CD4-positive, alpha-beta T cell (primary cell): ENCODE measurements at regions of chr1 and their contacts with region 1.

Region 1: DNA sequence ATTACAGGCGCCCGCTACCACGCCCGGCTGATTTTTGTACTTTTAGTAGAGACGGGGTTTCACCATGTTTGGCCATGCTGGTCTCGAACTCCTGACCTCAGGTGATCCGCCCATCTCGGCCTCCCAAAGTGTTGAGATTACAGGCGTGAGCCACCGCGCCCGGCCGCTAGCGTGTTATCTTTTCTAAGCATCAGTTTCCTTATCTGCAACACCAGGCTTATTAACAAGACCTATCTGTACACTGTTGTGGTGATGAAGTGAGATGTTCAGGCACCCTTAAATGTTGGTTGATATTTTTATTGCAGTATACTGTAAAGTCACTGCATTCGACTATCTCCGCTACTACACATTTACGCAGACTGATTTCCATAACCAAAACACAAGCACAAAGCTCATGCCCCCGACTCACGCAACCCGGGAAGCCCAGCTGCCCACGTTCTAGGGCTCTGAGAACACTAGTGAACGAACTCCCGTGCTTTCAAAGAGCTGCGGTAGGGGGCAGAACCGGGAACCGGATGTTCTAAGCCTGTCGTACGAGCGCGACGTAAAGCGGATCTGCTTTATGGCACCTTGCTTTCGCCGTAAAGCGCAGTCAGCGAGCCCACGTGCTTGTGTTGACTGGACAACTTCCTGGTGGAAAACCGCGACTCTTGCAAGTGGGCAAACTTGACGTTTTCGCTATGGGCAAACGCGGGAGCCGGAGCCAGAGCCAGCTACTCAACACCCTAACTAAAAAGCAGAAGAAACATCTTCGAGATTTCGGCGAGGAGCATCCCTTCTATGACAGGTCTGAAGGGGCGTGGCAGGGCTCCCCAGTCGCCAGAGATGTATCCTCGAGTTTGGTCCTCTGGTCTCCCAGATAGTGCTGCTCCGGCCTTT is at the start of gene UTP25:
- DNase-seq: peak; percentile 82 to 97 (median 90)
- ATAC-seq: peak; percentile 88
- H3K4me3 ChIP-seq: peak within 1 kb of the TSS; percentile 96
- H3K4me3 Mint-ChIP-seq: peak within 1 kb of the TSS; percentile 93
- H3K27ac ChIP-seq: peak within 1 kb of the TSS; percentile 62 to 89
- H3K27ac Mint-ChIP-seq: peak within 1 kb of the TSS; percentile 91
- H3K4me1 ChIP-seq: peaks cover 29% of the 10 kb centered on the region
- H3K4me1 Mint-ChIP-seq: peaks cover 50% of the 10 kb centered on the region
- H3K27me3 ChIP-seq: no peaks in the 10 kb centered on the region
- H3K27me3 Mint-ChIP-seq: peaks cover 7% of the 10 kb centered on the region
- CTCF ChIP-seq: peak; percentile 71
- total RNA-seq, gene UTP25: 6.0 to 6.4 TPM

Region 2: DNA sequence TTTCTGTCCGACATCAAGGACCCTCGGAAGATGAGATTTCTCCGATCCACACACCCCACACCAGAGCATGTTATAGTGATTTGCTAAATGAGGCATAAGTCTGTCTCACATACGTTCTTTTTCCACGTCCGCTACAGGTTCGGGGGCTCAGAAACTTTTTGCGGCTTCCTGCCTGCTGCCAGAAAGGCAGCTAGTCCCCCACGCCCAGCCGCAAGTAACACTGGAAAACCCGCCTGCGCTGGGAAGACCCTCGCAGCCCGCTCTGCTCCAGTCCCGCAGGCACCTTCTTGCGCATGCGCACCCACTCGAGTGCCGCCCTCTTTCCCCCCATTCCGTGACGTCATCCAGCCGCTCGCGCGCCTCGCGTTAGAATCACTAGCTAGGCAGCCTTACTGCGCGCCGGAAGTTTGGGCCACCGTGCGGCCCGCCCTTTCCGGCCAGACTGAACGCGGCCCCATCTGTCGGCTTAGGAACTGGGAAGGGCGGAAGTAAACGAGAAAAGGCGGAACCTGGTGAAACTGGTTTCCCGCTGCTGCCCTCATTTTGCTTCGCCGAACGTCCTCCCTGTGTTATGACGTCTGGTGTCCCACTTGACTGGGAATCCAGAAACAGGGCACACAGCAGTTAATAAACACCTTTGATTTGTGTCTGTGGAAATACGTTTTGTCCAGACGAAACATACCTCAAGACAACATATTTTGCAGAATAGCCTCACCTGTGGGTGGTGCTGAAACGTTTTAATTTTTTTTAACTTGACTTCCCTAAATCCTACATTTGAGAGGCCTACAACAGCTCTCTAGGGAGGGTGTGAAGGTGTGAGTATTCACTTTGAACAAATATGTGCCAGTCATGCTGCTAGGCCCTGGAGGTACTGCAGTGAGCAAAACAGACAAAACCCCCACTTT is 43.1 kb before region 1 on chr1 and contains the start of gene C1orf74:
- CTCF ChIA-PET with region 1: interaction called, 10 read pairs
- POLR2A ChIA-PET with region 1: interaction called, 18 read pairs
- intact Hi-C with region 1: loop called (anchors 1 to 2 kb)
- DNase-seq: peak; percentile 98 to 100 (median 99)
- ATAC-seq: peak; percentile 98
- H3K4me3 ChIP-seq: peak within 1 kb of the TSS; percentile 69
- H3K4me3 Mint-ChIP-seq: peak within 1 kb of the TSS; percentile 93
- H3K27ac ChIP-seq: peak within 1 kb of the TSS; percentile 74 to 94
- H3K27ac Mint-ChIP-seq: peak within 1 kb of the TSS; percentile 97
- H3K4me1 ChIP-seq: peaks cover 24% of the 10 kb centered on the region
- H3K4me1 Mint-ChIP-seq: peaks cover 28% of the 10 kb centered on the region
- H3K27me3 ChIP-seq: no peaks in the 10 kb centered on the region
- H3K27me3 Mint-ChIP-seq: peaks cover 17% of the 10 kb centered on the region
- CTCF ChIP-seq: no peak
- total RNA-seq, gene C1orf74: 0.63 to 0.67 TPM

Region 3: DNA sequence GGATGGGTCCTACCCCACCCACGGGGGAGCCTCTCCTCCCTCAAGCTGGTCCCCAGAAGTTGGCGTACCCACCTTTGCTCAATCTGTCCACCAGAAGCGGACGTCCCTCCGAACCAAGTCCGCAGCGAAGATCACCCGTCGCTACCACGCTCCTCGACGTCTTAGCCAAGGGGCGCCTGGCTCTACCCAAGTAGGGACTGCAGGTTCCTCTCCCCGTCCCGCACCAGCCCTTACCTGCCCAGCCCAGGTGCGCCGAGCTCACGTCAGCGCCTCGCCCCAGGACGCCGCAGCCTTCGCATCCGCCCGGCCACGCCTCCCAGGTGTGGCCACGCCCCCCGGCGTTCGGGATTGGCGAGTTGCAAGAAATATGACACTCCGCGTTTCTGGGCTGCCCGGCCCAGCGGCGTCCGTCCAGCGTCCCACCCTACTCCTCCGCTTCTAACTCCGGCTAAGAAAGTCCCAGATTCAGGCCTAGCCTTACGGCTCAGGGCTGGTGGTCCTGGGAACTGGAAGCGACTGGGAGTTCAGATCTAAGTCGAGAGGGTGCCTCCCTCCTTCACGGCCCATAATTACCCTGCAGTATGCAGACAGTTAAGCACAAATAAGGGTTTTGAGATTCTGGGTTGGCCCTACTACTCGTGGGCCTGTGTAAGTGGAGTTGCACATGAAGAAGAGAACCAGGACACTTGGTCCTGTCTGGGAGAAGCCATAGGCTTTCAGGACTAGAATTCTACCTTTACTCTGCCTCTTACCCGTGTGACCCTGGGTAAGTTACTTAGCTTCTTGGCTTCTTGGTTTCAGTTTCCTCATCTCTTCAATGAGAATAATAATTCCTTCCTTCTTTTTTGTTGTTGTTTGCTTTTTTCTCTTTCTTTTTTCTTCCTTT is 21.5 kb before region 1 on chr1 and contains the start of gene IRF6:
- CTCF ChIA-PET with region 1: interaction called, 18 read pairs
- POLR2A ChIA-PET with region 1: interaction called, 6 read pairs
- intact Hi-C with region 1: no loop called
- DNase-seq: peak; percentile 41 to 86 (median 68)
- ATAC-seq: peak; percentile 96
- H3K4me3 ChIP-seq: peak within 1 kb of the TSS; percentile 45
- H3K4me3 Mint-ChIP-seq: peak within 1 kb of the TSS; percentile 88
- H3K27ac ChIP-seq: no peak within 1 kb of the TSS
- H3K27ac Mint-ChIP-seq: peak within 1 kb of the TSS; percentile 65
- H3K4me1 ChIP-seq: peaks cover 8% of the 10 kb centered on the region
- H3K4me1 Mint-ChIP-seq: peaks cover 8% of the 10 kb centered on the region
- H3K27me3 ChIP-seq: peaks cover 4% of the 10 kb centered on the region in 2 experiments
- H3K27me3 Mint-ChIP-seq: peaks cover 20% of the 10 kb centered on the region
- CTCF ChIP-seq: no peak
- total RNA-seq, gene IRF6: 0.74 to 1.7 TPM